Ovary (tissue), 10 donors: ENCODE measurements at regions of chr12 and their contacts with region 1.

Region 1: DNA sequence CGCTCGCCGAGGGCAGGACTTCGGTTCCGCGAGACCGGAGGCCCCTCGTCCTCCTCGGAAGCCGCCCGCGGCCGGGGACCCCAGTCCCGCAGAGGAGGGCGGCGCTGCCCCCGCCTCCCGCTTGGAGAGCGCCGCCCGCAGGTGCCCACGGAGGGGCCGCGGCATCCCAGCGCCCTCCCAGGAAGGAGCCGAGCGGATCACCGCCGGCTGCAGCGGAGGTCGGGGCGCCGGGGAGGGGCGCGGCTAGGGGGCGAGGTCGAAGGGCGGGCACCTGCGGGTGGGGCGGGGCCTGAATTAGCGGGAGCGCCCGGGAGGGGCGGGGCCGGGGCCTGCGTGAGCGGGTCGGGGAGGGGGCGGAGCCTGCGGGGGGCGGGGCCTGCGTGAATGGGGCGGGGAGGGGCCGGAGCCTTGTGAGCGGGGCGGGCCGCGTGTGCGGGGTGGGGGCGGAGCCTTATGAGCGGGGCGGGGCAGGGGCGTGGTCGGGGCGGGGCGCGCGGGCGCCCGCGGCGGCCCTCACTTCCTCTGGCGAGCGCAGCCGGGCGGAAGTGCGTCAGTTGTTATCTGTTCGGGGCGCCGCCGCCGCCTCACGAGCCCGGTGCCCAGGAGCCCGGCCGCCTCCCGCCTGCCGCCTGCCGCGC is at the start of gene FBRSL1:
- DNase-seq: peak; percentile 89 to 94 (median 92)
- H3K4me3 ChIP-seq: peak within 1 kb of the TSS; percentile 56
- H3K27ac ChIP-seq: peak within 1 kb of the TSS in 1 of 2 donors; percentile 71
- H3K4me1 ChIP-seq: peaks cover 29% of the 10 kb centered on the region
- H3K27me3 ChIP-seq: no peaks in the 10 kb centered on the region
- CTCF ChIP-seq: no peak
- EP300 ChIP-seq: no peak
- POLR2A ChIP-seq: no peak
- total RNA-seq, gene FBRSL1: 12.6 to 69.5 (median 54.3) TPM

Region 2: DNA sequence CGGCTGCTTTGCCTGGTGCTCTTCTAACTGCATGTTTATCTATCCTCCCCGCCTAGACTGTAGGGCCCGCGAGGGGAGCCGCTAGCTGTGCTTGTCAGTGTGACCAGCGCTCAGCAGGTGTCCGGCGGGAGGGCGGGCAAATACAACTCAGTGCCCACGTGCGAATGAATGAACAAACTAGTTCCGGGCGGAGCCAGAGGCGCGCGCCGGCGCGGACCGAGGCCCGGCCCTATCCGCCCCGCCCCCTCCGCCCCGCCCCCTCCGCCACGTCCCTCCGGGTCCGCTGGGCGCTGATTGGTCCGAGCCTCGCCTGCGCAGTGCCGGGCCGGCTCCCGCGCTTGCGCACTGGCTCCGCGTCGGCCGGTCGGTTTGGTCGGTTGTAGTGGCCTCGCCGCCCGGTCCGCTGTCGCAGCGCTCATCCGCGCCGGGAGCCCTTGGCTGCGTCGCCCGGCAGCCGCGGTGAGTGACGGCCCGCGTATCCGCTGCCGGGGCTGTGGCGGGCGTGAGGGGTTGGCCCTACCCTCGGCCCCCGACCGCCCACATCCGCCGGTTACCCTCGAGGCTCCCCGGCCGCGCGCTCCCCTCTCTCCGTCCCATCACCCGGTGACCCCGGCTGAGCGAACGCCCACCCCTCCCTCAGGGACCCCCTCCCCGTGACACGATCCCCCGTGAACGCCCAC is 405.6 kb before region 1 on chr12:
- intact Hi-C with region 1: no loop called
- DNase-seq: peak; percentile 86 to 93 (median 91)
- H3K4me3 ChIP-seq: peak overlapping the region; percentile 94
- H3K27ac ChIP-seq: peak overlapping the region in 1 of 2 donors; percentile 55
- H3K4me1 ChIP-seq: peaks cover 7% of the 10 kb centered on the region
- H3K27me3 ChIP-seq: no peaks in the 10 kb centered on the region
- CTCF ChIP-seq: no peak
- EP300 ChIP-seq: no peak
- POLR2A ChIP-seq: peak; percentile 92

Region 3: DNA sequence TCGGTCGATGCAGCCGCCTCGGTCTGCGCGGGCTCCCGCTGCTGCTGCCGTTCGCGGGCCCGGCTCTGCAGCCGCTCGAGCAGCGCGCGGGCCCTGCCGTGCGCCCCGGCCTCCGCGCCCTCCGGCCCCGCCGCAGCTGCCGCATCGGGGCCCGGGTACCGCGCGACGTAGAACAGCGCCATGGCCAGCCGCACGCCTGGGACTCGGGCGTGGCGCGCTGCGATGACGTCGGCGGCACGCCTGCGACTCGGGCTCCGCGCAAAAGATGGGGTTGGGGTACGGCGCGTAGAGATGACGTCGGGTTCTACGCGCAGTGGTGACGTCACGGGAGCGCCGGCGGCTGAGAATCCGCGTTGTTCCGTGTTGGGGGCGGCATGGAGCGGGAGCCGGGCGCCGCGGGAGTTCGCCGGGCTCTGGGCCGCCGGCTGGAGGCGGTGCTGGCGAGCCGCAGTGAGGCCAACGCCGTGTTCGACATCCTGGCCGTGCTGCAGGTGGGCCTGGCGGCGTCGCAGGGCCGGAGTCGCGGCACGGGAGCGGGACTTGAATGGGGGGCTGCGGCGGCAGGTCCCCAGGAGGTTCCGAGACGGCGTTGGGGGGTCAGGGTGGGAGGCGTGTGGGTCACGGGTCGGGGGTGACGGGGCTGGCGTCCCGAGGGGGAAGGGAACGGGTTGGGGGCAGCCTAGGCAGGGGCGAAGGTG is 345.5 kb before region 1 on chr12 and contains the starts of genes DDX51 and NOC4L:
- intact Hi-C with region 1: loop called in 1 of 4 experiments (anchors 5 kb)
- DNase-seq: peak; percentile 91 to 98 (median 95)
- H3K4me3 ChIP-seq: peak within 1 kb of the TSS; percentile 99
- H3K27ac ChIP-seq: peak within 1 kb of the TSS; percentile 70 to 78
- H3K4me1 ChIP-seq: peaks cover 25% of the 10 kb centered on the region
- H3K27me3 ChIP-seq: no peaks in the 10 kb centered on the region
- CTCF ChIP-seq: peak in 2 of 3 donors; percentile 33 to 56
- EP300 ChIP-seq: no peak
- POLR2A ChIP-seq: peak; percentile 54
- total RNA-seq, gene DDX51: 18.0 to 26.2 (median 21.8) TPM
- total RNA-seq, gene NOC4L: 8.6 to 23.4 (median 18.5) TPM

Region 4: DNA sequence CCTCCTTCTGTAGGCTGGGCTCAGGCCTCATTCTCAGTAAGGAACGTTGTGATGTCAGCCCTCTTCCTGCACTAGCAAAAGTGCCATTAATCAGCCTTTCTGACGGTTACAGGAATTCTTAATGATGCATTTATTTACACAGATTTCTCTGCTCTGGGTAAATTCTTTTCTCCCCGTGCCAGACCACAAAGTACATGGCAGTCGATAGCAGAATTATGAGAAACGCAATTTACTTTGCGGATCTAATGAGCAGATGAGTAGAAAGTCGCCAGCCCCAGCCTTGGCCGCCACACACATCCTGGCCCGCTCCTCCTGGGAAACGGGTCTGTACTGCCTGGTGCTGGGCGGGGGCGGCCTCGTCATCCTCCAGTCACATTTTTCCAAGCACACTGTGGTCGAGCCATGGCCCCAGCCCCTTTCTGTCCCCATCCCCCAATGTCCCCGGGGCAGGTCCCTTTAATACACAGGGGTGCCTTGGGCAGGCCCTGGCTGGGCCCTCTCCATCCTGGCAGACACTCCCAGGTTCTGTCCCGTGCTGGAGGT is 319.6 kb before region 1 on chr12:
- intact Hi-C with region 1: no loop called
- DNase-seq: peak in 1 of 5 donors; percentile 9
- H3K4me3 ChIP-seq: no peak overlapping the region
- H3K27ac ChIP-seq: no peak overlapping the region
- H3K4me1 ChIP-seq: no peaks in the 10 kb centered on the region
- H3K27me3 ChIP-seq: no peaks in the 10 kb centered on the region
- CTCF ChIP-seq: no peak
- EP300 ChIP-seq: no peak
- POLR2A ChIP-seq: no peak